GM13976 (cell line): ENCODE measurements at regions of chr13 and their contacts with region 1.

Region 1: GRCh38 chr13:48769107-48769704 is 115.5 kb downstream of the CYSLTR2 start:
- DNase-seq: peak; percentile 55
- CTCF ChIP-seq: peak; percentile 98

Region 2: GRCh38 chr13:48126944-48127830 is 642.0 kb before region 1 on chr13:
- in situ Hi-C with region 1: loop called (anchors 10 kb)
- DNase-seq: peak; percentile 59
- CTCF ChIP-seq: peak; percentile 44

Region 3: DNA sequence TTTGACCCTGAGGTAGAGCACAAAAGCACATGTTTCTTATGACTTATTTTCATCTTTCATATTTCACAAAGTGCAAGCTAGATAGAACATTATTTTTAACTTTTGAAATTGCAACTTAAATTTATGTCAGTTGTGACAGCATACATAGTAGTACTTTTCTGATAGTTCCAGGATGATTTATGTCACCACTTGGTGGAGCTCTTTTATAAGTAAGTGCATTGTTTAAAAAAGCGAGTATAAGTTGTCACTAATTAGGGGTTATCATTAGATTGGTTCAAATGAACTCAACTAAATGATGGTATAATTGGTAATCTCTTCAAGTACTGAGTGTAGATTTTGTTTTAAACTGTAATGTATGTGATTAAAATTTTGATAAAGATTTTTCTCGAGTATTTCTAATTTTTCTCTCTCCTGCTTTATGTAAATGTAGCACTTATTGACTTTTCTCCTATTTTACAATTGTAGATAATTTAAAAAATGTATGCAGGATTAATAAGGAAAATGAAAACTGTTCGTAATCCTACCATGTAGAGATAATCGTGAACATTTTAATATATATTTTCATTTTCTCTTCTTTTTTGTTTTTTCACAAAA is 434.6 kb before region 1 on chr13:
- in situ Hi-C with region 1: loop called (anchors 10 kb)
- DNase-seq: peak; percentile 33
- CTCF ChIP-seq: peak; percentile 24

Region 4: DNA sequence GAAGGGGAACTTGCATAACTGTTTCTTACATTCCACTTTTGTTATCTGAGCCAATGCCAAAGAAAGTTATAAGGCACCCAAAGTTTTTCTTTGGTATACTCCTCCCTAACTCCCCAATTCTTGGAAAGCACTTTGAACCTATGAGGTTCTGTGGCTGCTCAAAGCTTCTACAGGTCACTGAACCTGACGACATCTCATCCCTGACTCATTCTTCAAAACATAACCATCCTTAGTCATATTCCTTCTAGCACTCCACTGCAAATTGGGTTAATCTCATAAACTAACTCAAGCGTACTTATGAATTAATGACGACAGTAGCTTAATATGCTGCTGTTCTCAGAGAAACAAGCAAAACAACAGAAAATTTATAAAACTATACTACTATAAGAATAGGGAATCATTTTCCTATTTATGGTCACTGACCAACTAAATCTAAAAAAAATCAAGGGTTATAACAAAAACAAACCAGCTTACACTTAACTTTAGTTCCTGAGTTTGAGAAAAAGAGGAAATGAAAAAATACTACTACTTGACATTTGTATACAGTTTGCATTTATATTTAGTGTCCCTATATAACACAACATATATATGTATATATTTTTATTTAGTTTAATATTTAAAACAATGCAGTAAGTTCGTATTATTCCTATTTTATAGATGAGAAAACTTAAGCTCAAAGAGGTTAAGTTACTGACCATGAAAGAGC is 605.5 kb after region 1 on chr13:
- in situ Hi-C with region 1: no loop called
- DNase-seq: peak; percentile 21
- CTCF ChIP-seq: no peak

Region 5: GRCh38 chr13:49669735-49670309 is 900.6 kb after region 1 on chr13:
- in situ Hi-C with region 1: no loop called
- DNase-seq: peak; percentile 48
- CTCF ChIP-seq: peak; percentile 23